Activated CD4-positive, alpha-beta memory T cell treated with anti-CD3 and anti-CD28 coated beads, Interleukin-2, amount 10 ng/mL, durations not matched to agents 7 days and 5 days (primary cell): ENCODE measurements at regions of chr14 and their contacts with region 1.

Region 1: GRCh38 chr14:54773171-54773975 is 129.3 kb downstream of the GCH1 start:
- DNase-seq: peak; percentile 84
- H3K4me3 Mint-ChIP-seq: peak overlapping the region; percentile 49
- H3K27ac Mint-ChIP-seq: peak overlapping the region; percentile 67
- H3K4me1 Mint-ChIP-seq: peaks cover 37% of the 10 kb centered on the region
- H3K27me3 Mint-ChIP-seq: peaks cover 38% of the 10 kb centered on the region

Region 2: DNA sequence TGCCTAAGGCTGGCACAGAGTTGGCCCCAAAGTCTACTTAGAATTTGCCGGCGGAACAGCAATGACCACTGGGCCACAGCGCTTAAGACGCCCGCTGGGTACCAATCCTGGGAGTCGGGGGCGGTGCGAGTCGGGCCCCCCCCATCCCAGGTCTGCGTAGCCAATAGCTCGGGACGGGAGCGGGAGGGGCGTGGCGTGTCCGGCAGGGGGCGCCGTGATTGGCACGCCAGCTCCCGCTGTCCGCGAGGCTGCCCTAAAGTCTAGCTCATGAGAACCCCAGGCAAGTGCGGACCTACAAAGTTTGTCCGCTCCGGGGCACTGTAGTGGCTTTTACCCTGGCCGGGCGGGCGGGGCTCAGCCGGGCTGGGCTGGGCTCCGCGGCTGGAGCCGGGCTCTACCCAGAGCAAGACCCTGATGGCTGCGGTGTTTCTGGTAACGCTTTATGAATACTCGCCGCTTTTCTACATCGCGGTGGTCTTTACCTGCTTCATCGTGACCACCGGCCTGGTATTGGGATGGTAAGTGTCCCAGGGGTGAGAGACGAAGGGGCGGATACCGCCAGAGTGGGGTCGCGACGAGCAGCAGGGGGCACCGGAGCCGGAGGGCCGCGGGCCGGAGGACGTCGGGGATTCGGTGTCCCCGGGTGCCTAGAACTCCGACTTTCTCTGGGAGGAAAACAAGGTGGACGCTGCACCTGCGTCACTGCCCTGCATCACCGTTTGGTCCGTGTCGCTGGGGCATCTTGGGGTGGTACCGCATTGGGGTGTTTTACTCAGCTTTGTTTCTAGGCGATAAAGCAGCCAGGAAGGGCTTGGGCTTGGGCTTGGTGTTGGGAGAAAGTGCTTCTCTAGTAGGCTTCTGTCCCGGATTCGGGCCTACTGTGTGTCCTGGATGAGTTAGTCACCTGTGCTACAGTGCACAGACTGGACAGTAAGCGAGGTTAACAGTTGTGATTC is 263.5 kb before region 1 on chr14 and contains the start of gene CGRRF1:
- CTCF ChIA-PET with region 1: interaction called, 19 read pairs
- POLR2A ChIA-PET with region 1: interaction called, 3 read pairs
- DNase-seq: peak; percentile 97
- H3K4me3 Mint-ChIP-seq: peak within 1 kb of the TSS; percentile 93
- H3K27ac Mint-ChIP-seq: peak within 1 kb of the TSS; percentile 74
- H3K4me1 Mint-ChIP-seq: peaks cover 30% of the 10 kb centered on the region
- H3K27me3 Mint-ChIP-seq: peaks cover 1% of the 10 kb centered on the region
- total RNA-seq, gene CGRRF1: 13.3 to 14.0 TPM

Region 3: DNA sequence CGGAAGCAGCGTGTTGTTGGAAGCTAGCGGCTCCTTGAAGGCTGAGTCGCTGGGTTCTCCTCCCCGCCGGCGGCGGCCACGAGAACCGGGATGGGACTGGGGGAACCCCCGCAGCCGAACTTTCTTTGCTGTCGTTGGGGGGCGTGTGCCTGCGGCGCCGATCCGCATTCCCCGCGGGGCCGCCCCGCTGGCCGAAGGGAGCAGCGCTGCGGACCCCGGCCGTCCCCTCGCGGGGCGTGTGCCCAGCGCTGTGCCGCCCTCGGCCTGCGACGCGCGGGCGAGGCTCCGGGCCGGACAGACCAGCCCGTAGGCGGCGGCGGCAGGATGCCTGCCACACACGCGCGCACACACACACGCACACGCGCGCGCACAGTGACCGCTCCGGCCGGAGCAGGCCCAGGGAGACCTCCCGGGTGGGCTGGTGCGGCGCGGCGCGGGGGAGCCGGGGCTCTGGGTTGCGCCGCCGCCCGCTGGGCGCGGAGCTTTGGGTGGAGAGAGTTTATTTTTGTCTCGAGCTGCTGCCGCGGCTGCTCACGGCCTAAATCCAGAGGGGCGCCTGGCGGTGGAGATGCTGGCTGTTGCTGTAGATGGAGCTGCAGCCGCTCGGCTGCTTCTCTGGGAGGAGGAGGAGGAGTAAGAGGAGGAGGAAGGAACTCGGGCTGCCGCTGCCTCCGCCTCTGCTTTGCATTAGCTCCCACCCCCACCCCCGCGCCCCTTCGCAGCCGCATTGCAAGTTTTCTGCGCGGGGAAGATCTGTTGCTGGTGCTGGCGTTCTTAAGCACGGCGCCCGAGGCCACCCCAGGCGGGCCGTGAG is 206.8 kb before region 1 on chr14 and contains the start of gene SAMD4A:
- CTCF ChIA-PET with region 1: interaction called, 238 read pairs
- POLR2A ChIA-PET with region 1: interaction called, 60 read pairs
- DNase-seq: peak; percentile 55
- H3K4me3 Mint-ChIP-seq: peak within 1 kb of the TSS; percentile 89
- H3K27ac Mint-ChIP-seq: no peak within 1 kb of the TSS
- H3K4me1 Mint-ChIP-seq: peaks cover 19% of the 10 kb centered on the region
- H3K27me3 Mint-ChIP-seq: peaks cover 45% of the 10 kb centered on the region
- total RNA-seq, gene SAMD4A: 1.0 to 1.2 TPM

Region 4: GRCh38 chr14:54669721-54670561 is 103.4 kb before region 1 on chr14:
- CTCF ChIA-PET with region 1: interaction called, 16 read pairs
- POLR2A ChIA-PET with region 1: interaction called, 5 read pairs
- DNase-seq: peak; percentile 28
- H3K4me3 Mint-ChIP-seq: no peak overlapping the region
- H3K27ac Mint-ChIP-seq: peak overlapping the region; percentile 48
- H3K4me1 Mint-ChIP-seq: peaks cover 47% of the 10 kb centered on the region
- H3K27me3 Mint-ChIP-seq: peaks cover 32% of the 10 kb centered on the region

Region 5: DNA sequence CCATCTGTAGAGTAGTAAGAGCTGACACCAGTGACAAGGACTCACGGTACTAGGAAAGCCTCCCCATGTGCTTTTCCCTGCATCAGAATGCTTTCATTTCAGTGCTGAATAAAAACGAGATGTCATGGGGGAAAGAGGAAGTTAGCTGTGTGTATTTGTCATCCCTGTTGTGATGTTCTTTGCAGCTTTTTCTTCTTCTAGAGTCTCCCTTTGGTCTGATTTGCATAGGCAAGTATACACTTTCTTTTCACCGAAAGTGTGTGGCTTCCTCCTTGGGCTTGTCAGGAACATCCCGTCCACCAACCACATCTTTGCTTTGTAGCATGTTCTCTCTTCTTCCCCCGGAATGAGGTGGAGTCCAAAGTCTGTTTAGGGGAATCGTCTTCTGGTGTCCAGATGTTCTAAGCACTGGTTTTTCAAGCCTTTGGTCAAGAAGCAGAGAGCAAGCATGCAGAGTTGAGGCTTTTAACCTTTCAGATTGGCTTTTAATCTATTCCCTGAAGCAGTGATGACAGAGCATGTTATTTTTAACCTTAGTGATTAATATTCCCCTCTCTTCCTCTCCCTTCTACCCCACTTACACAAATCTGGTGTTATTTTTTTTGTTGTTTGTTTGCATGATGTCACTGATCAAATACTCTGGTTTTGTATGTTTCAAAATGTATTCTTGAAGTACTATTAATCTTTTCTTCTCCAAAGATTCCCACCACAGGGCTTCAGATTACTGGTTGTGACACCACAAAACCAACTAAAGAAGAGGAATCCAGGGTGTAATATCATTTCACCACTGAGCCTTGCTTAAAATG is 43.0 kb before region 1 on chr14:
- CTCF ChIA-PET with region 1: interaction called, 27 read pairs
- POLR2A ChIA-PET with region 1: interaction called, 4 read pairs
- DNase-seq: peak; percentile 45
- H3K4me3 Mint-ChIP-seq: peak overlapping the region; percentile 27
- H3K27ac Mint-ChIP-seq: peak overlapping the region; percentile 69
- H3K4me1 Mint-ChIP-seq: peaks cover 26% of the 10 kb centered on the region
- H3K27me3 Mint-ChIP-seq: peaks cover 54% of the 10 kb centered on the region

Region 6: GRCh38 chr14:54814076-54814475 is 40.7 kb after region 1 on chr14:
- CTCF ChIA-PET with region 1: no interaction called
- POLR2A ChIA-PET with region 1: no interaction called
- DNase-seq: no peak
- H3K4me3 Mint-ChIP-seq: no peak overlapping the region
- H3K27ac Mint-ChIP-seq: no peak overlapping the region
- H3K4me1 Mint-ChIP-seq: no peaks in the 10 kb centered on the region
- H3K27me3 Mint-ChIP-seq: peaks cover 7% of the 10 kb centered on the region